Endothelial cell of umbilical vein (primary cell): ENCODE measurements at regions of chr1 and their contacts with region 1.

Region 1: GRCh38 chr1:234114648-234115307 is 210.3 kb downstream of the SLC35F3 start:
- DNase-seq: peak; percentile 49
- H3K4me3 ChIP-seq: no peak overlapping the region
- H3K27ac ChIP-seq: no peak overlapping the region
- H3K4me1 ChIP-seq: peaks cover 3% of the 10 kb centered on the region
- H3K27me3 ChIP-seq: peaks cover 0 to 2% of the 10 kb centered on the region in 2 experiments
- CTCF ChIP-seq: peak; percentile 48 to 56
- POLR2A ChIP-seq: no peak

Region 2: GRCh38 chr1:233394860-233395717 is 719.7 kb before region 1 on chr1:
- CTCF ChIA-PET with region 1: no interaction called
- POLR2A ChIA-PET with region 1: no interaction called
- dilution Hi-C with region 1: no loop called
- intact Hi-C with region 1: loop called (anchors 2 kb)
- DNase-seq: peak; percentile 59
- H3K4me3 ChIP-seq: no peak overlapping the region
- H3K27ac ChIP-seq: no peak overlapping the region
- H3K4me1 ChIP-seq: no peaks in the 10 kb centered on the region
- H3K27me3 ChIP-seq: peaks cover 0 to 2% of the 10 kb centered on the region in 2 experiments
- CTCF ChIP-seq: peak; percentile 40 to 64
- POLR2A ChIP-seq: no peak

Region 3: GRCh38 chr1:234125283-234125682 is 10.5 kb after region 1 on chr1:
- CTCF ChIA-PET with region 1: interaction called, 14 read pairs
- POLR2A ChIA-PET with region 1: no interaction called
- dilution Hi-C with region 1: no loop called
- intact Hi-C with region 1: no loop called
- DNase-seq: no peak
- H3K4me3 ChIP-seq: no peak overlapping the region
- H3K27ac ChIP-seq: no peak overlapping the region
- H3K4me1 ChIP-seq: no peaks in the 10 kb centered on the region
- H3K27me3 ChIP-seq: no peaks in the 10 kb centered on the region
- CTCF ChIP-seq: no peak
- POLR2A ChIP-seq: no peak

Region 4: DNA sequence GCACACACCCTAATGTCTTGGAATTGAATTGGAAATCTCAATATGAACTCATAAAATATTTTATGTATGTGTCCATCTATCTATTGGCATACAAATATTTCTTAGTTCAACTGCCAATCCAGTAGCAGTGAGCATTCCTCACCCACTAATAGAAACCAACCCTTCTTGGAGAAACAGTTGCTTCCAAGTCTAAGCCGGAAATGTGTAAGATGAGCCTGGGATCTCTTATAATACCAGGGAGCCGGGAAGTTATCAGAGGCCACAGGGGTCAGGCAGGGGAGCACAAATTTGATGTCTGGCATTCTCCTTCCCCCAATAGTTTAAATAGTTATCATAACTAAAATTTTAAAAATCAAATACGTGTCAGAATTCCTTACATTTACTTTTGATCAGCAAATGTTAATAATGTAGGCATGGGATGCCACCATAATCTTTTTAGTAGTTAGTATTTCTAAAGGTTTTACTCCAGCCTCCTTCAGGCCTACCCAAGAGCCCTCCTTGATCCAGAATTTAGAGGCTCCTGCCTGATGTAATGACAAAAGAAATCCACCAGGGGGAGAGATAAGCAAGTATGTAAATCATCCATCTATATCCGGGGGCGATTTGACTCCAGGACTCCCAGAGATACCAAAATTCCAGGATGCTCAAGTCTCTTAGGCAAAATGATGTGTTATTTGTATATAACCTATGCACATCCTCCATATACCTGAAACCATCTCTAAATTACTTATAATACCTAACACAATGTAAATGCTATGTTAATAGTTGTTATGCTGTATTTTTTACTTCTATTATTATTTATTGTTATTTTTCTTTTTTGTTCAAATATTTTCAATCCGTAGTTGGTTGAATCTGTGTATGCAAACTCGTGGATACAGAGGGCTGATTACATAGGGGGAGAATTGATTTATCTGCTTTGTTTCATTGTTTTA is 39.8 kb after region 1 on chr1:
- CTCF ChIA-PET with region 1: no interaction called
- POLR2A ChIA-PET with region 1: no interaction called
- dilution Hi-C with region 1: no loop called
- intact Hi-C with region 1: loop called (anchors 1 kb)
- DNase-seq: peak; percentile 57
- H3K4me3 ChIP-seq: no peak overlapping the region
- H3K27ac ChIP-seq: no peak overlapping the region
- H3K4me1 ChIP-seq: no peaks in the 10 kb centered on the region
- H3K27me3 ChIP-seq: no peaks in the 10 kb centered on the region
- CTCF ChIP-seq: peak; percentile 56 to 57
- POLR2A ChIP-seq: no peak

Region 5: GRCh38 chr1:234188454-234188792 is 73.6 kb after region 1 on chr1:
- CTCF ChIA-PET with region 1: interaction called, 4 read pairs
- POLR2A ChIA-PET with region 1: no interaction called
- dilution Hi-C with region 1: no loop called
- intact Hi-C with region 1: loop called (anchors 1 kb)
- DNase-seq: no peak
- H3K4me3 ChIP-seq: no peak overlapping the region
- H3K27ac ChIP-seq: no peak overlapping the region
- H3K4me1 ChIP-seq: no peaks in the 10 kb centered on the region
- H3K27me3 ChIP-seq: no peaks in the 10 kb centered on the region
- CTCF ChIP-seq: no peak
- POLR2A ChIP-seq: no peak

Region 6: GRCh38 chr1:234309598-234310459 is 195.1 kb after region 1 on chr1:
- CTCF ChIA-PET with region 1: interaction called, 81 read pairs
- POLR2A ChIA-PET with region 1: no interaction called
- dilution Hi-C with region 1: no loop called
- intact Hi-C with region 1: loop called (anchors 1 kb)
- DNase-seq: peak; percentile 43
- H3K4me3 ChIP-seq: no peak overlapping the region
- H3K27ac ChIP-seq: no peak overlapping the region
- H3K4me1 ChIP-seq: peaks cover 2% of the 10 kb centered on the region
- H3K27me3 ChIP-seq: peaks cover 0 to 3% of the 10 kb centered on the region in 2 experiments
- CTCF ChIP-seq: peak; percentile 91 to 92
- POLR2A ChIP-seq: no peak

Region 7: GRCh38 chr1:234478481-234479309 is 363.9 kb after region 1 on chr1 and contains the start of gene TARBP1:
- CTCF ChIA-PET with region 1: no interaction called
- POLR2A ChIA-PET with region 1: no interaction called
- dilution Hi-C with region 1: no loop called
- intact Hi-C with region 1: loop called (anchors 10 kb)
- DNase-seq: peak; percentile 75
- H3K4me3 ChIP-seq: peak within 1 kb of the TSS; percentile 46 to 78 (median 48)
- H3K27ac ChIP-seq: peak within 1 kb of the TSS; percentile 35
- H3K4me1 ChIP-seq: peaks cover 6% of the 10 kb centered on the region
- H3K27me3 ChIP-seq: peaks cover 18 to 21% of the 10 kb centered on the region in 2 experiments
- CTCF ChIP-seq: peak in 1 of 2 donors; percentile 27
- POLR2A ChIP-seq: peak; percentile 71
- total RNA-seq, gene TARBP1: 21.0 and 23.4 TPM in 2 replicates